Dorsolateral prefrontal cortex (tissue), 120 donors: ENCODE measurements at regions of chr2 and their contacts with region 1.

Region 1: DNA sequence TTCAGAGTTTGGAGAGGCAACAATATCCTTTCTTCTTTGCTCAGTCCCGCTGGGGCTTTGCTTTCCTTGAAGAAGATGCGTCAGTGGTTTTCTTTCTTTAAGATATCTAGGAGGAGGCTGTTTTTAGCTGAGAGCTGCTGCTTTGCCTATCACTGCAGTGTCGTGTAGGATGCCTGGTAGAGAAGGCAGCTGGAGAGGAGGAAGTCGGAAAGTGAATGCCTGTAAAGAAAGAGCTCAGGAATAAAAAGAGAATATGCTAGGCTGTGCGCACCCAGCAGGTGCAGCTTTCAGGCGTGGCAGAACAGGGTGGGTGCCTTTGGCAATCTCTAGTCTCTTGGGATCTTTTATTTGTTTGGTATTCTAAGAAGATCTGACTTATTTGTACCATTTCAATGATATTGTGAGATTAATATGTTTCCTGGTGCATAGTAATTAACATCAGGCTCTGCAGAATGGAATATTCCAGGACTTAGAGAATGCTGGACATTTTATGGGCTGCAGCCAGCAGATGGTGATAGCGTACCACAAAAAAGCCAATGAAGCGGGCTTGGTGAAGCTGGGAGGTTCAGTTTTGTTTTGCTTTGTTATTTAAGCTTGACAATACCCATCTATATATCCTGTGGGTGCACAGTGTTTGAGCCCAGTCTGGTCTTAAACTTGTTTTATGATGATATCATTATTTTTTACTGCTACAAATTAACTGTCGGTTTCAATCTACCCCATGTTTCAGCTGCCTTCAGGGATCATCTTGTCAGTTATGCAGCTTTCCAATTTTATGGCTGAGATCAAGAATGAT is 34.9 kb downstream of the CAVIN2 start:
- DNase-seq: peak; percentile 53 to 83 (median 68)
- H3K4me3 ChIP-seq: peak overlapping the region in 45 of 59 donors; percentile 3 to 48 (median 32)
- H3K27ac ChIP-seq: peak overlapping the region; percentile 0 to 93 (median 75)
- H3K27me3 ChIP-seq: no peaks in the 10 kb centered on the region
- CTCF ChIP-seq: peak; percentile 62 to 96 (median 86)

Region 2: GRCh38 chr2:191555092-191555742 is 256.8 kb before region 1 on chr2:
- intact Hi-C with region 1: loop called in 1 of 2 experiments (anchors 5 kb)
- DNase-seq: peak; percentile 61 to 89 (median 82)
- H3K4me3 ChIP-seq: peak overlapping the region in 8 of 59 donors; percentile 0 to 47 (median 18)
- H3K27ac ChIP-seq: no peak overlapping the region
- H3K27me3 ChIP-seq: peaks cover 0 to 12% (median 0%) of the 10 kb centered on the region in 45 donors
- CTCF ChIP-seq: peak; percentile 62 to 89 (median 80)

Region 3: DNA sequence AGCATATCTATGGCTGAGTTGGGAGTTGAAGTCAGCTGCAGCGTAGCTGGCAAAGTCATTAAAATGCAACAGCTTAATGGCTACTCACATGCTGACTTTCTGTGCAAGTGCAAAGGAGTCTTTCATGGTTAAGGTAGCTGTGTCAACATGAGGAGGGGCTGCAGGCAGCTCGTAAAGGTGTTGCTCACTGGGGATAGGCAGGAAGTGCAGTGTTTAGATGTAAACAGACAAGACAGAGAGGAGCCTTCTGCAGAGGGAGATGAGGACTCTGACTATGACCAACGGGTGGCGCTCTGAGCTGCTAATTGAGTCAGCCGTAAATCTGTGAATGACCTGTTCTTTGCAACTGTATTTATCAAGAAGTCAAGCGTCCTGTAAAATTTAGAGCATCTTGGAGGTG is 57.2 kb after region 1 on chr2:
- intact Hi-C with region 1: loop called (anchors 2 to 5 kb)
- DNase-seq: peak in 8 of 10 donors; percentile 9 to 75 (median 56)
- H3K4me3 ChIP-seq: peak overlapping the region in 2 of 59 donors; percentile 2 to 4
- H3K27ac ChIP-seq: peak overlapping the region in 1 of 59 donors; percentile 40
- H3K27me3 ChIP-seq: no peaks in the 10 kb centered on the region
- CTCF ChIP-seq: peak in 45 of 56 donors; percentile 7 to 63 (median 37)

Region 4: GRCh38 chr2:192029089-192029488 is 217.1 kb after region 1 on chr2:
- intact Hi-C with region 1: no loop called
- DNase-seq: no peak
- H3K4me3 ChIP-seq: no peak overlapping the region
- H3K27ac ChIP-seq: peak overlapping the region in 1 of 59 donors; percentile 10
- H3K27me3 ChIP-seq: no peaks in the 10 kb centered on the region
- CTCF ChIP-seq: no peak

Region 5: GRCh38 chr2:192162392-192163042 is 350.5 kb after region 1 on chr2:
- intact Hi-C with region 1: loop called (anchors 2 to 10 kb)
- DNase-seq: peak in 6 of 10 donors; percentile 32 to 80 (median 61)
- H3K4me3 ChIP-seq: peak overlapping the region in 9 of 59 donors; percentile 5 to 39 (median 13)
- H3K27ac ChIP-seq: peak overlapping the region in 40 of 59 donors; percentile 3 to 74 (median 38)
- H3K27me3 ChIP-seq: peaks cover 0 to 3% (median 0%) of the 10 kb centered on the region in 45 donors
- CTCF ChIP-seq: peak; percentile 82 to 98 (median 94)

Region 6: DNA sequence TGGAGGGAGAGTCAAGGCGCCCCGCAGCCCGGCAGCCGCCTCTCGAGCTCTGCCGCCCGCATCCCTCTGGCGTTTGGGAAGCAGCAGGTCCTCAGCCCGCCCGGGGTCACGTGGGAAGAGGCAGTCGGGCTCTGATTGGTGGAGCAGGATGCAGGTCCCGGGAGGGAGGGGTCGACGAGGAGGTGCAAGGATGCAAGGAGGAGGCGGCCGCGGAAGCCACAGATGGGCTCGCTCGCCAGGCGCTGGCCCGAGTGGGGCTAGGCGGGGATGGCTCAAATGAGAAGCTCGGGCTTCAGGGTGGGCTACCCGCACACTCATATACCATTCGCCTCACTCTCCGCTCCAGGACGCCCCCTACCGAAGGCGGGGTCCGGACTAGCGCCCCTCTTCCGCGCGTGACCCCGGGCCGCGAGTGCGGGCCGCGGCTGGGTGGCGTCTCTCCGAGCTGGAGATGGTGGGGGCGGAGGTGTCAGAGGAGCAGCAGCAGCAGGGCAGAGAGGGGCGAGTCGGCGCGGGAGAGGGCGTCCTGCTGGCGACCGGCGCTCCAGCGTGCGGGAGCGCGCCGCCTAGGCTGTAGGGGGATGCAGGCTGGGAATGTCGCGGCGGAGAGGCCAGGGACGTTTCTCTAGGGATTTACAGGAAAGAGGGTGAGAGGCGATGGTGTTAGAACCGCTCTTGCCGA is 383.0 kb after region 1 on chr2 and contains the start of gene TMEFF2:
- intact Hi-C with region 1: loop called (anchors 2 kb)
- DNase-seq: peak; percentile 99 to 100 (median 99)
- H3K4me3 ChIP-seq: peak within 1 kb of the TSS; percentile 58 to 93 (median 78)
- H3K27ac ChIP-seq: peak within 1 kb of the TSS; percentile 84 to 98 (median 96)
- H3K27me3 ChIP-seq: peaks cover 0 to 32% (median 0%) of the 10 kb centered on the region in 45 donors
- CTCF ChIP-seq: peak in 55 of 56 donors; percentile 18 to 83 (median 51)
- total RNA-seq, gene TMEFF2: 13.6 to 71.1 (median 44.6) TPM

Region 7: GRCh38 chr2:192286093-192286701 is 474.2 kb after region 1 on chr2:
- intact Hi-C with region 1: loop called in 1 of 2 experiments (anchors 5 kb)
- DNase-seq: peak in 3 of 10 donors; percentile 19 to 60 (median 38)
- H3K4me3 ChIP-seq: no peak overlapping the region
- H3K27ac ChIP-seq: peak overlapping the region in 4 of 59 donors; percentile 5 to 51 (median 23)
- H3K27me3 ChIP-seq: no peaks in the 10 kb centered on the region
- CTCF ChIP-seq: peak in 55 of 56 donors; percentile 21 to 86 (median 60)